B cell (primary cell): ENCODE measurements at regions of chr15 and their contacts with region 1.

Region 1: GRCh38 chr15:97259943-97260342 is 700.6 kb upstream of the ARRDC4 start:
- DNase-seq: no peak
- ATAC-seq: no peak
- H3K4me3 ChIP-seq: no peak overlapping the region
- H3K4me3 Mint-ChIP-seq: no peak overlapping the region
- H3K27ac ChIP-seq: no peak overlapping the region
- H3K27ac Mint-ChIP-seq: no peak overlapping the region
- H3K4me1 ChIP-seq: no peaks in the 10 kb centered on the region
- H3K4me1 Mint-ChIP-seq: no peaks in the 10 kb centered on the region
- H3K27me3 ChIP-seq: no peaks in the 10 kb centered on the region
- H3K27me3 Mint-ChIP-seq: no peaks in the 10 kb centered on the region
- CTCF ChIP-seq: no peak

Region 2: DNA sequence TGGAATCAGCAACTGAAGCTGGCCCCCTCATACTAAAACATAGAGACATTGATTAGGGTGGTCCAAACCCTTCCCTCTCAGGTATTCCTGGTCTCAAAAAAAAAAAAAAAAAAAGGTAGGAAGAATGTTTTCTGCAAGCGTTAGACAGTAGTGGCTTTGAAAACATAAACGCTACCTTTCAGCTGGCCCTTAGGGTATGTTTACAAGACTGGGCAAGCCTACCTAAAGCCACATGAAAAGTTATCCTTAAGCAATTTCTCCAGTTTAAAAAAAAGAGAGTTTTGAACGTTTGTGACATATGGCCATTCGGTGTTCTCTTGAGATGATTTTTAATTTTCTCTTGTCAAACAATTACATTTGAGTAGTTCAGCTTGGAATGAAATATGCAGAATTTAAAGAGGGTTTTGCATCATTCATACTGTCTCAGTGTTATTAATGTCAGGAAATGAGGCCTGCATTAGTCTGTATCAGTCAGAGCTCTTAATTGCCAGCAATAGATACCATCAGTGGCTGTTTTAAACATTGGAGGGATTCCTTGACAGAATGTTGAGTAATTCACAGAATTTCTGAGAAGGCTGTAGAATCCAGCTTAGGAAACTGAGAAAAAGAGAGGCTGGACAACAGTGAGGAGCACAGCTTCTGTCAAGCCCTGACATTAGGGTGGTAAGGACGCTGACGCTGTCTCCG is 207.6 kb before region 1 on chr15:
- CTCF ChIA-PET with region 1: no interaction called
- POLR2A ChIA-PET with region 1: no interaction called
- intact Hi-C with region 1: no loop called
- DNase-seq: no peak
- ATAC-seq: no peak
- H3K4me3 ChIP-seq: no peak overlapping the region
- H3K4me3 Mint-ChIP-seq: no peak overlapping the region
- H3K27ac ChIP-seq: no peak overlapping the region
- H3K27ac Mint-ChIP-seq: no peak overlapping the region
- H3K4me1 ChIP-seq: no peaks in the 10 kb centered on the region
- H3K4me1 Mint-ChIP-seq: no peaks in the 10 kb centered on the region
- H3K27me3 ChIP-seq: no peaks in the 10 kb centered on the region
- H3K27me3 Mint-ChIP-seq: no peaks in the 10 kb centered on the region
- CTCF ChIP-seq: no peak

Region 3: DNA sequence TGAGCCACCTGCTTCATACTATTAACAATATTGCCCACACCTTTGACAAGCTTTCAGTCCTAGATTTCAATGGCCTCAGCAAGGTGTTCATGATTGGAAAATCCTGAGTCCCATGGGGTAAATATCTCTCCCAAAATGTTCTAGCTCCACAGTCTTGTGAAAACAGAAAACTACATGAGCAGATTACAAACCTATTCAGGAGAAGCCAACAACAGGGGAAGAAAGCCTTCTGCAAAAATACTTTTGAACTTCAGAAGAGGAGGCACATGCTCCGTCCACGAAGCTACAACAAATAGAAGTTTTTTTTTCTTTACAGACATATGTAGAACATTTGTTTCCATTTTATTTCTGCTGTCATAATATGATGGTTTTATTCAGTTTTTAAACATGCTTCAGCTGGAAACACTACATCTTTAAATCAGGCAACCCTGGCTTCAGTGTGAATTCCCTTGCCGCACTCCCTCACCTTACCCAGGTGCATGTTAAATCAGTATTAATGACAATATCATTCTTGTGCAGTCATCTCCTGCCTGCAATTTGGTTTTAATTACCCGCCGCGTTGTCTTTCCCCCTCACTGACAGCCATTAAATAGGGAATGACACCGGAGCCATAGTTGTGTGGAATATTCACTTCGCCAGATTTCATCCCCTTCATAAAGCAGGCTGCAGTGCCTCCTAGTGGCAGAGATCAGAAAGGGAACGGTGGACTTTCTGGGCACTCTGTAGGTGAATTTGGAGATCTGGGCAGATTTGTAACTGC is 24.9 kb before region 1 on chr15:
- CTCF ChIA-PET with region 1: no interaction called
- POLR2A ChIA-PET with region 1: no interaction called
- intact Hi-C with region 1: no loop called
- DNase-seq: no peak
- ATAC-seq: no peak
- H3K4me3 ChIP-seq: no peak overlapping the region
- H3K4me3 Mint-ChIP-seq: no peak overlapping the region
- H3K27ac ChIP-seq: no peak overlapping the region
- H3K27ac Mint-ChIP-seq: no peak overlapping the region
- H3K4me1 ChIP-seq: no peaks in the 10 kb centered on the region
- H3K4me1 Mint-ChIP-seq: no peaks in the 10 kb centered on the region
- H3K27me3 ChIP-seq: no peaks in the 10 kb centered on the region
- H3K27me3 Mint-ChIP-seq: no peaks in the 10 kb centered on the region
- CTCF ChIP-seq: peak; percentile 48

Region 4: DNA sequence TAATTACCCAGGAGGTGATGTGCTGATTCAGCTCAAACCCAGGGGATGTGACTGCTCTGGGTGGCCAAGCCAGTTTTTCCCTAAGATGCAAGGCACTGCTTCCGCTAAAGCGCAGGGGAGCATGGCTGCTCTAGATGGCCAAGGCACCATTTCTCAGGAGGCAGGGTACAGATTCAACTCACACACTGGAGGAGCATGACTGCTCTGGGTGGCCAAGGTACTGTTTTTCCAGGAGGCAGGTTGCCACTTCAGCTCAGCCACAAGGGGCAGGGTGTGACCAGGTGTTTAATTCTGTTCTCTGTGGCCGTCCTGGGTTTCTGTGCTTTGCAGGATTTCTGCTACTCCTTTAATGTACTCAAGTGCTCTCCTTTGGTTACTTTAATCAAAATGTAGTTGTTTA is 41.2 kb after region 1 on chr15:
- CTCF ChIA-PET with region 1: no interaction called
- POLR2A ChIA-PET with region 1: no interaction called
- intact Hi-C with region 1: loop called (anchors 10 kb)
- DNase-seq: no peak
- ATAC-seq: no peak
- H3K4me3 ChIP-seq: no peak overlapping the region
- H3K4me3 Mint-ChIP-seq: no peak overlapping the region
- H3K27ac ChIP-seq: no peak overlapping the region
- H3K27ac Mint-ChIP-seq: no peak overlapping the region
- H3K4me1 ChIP-seq: no peaks in the 10 kb centered on the region
- H3K4me1 Mint-ChIP-seq: no peaks in the 10 kb centered on the region
- H3K27me3 ChIP-seq: no peaks in the 10 kb centered on the region
- H3K27me3 Mint-ChIP-seq: no peaks in the 10 kb centered on the region
- CTCF ChIP-seq: no peak